Naive thymus-derived CD8-positive, alpha-beta T cell (primary cell): ENCODE measurements at regions of chr19 and their contacts with region 1.

Region 1: DNA sequence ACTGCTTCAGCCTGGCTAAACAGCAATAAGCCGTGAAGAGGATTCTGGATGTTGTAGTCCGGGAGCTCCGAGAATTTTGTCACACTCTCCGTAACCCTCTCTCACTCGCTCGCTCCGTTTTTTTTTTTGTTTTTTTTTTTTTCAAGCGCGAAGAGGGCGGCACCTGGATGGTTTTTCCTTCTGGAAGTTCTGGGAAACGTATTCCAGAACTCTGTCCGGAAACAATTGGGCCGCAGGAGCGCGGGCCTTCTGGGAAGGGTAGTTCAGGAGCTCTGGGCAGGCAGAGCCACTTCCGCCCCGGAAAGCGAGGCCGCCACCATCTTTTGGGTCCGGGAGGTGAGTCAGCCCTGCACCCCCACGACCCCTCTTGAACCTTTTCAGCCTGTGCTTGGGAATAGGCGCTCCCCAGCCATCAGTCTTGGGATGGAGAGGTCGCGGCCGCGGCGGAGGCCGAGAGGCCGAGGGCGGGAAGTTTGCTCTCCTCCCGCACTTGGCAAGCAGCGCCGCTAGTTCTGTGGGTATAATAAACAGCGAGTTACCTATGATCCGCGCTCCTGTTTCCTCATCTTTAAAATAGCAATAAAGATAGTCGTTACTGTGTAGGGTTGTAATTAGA is at the start of gene ZNF227:
- DNase-seq: peak; percentile 60 to 84 (median 76)
- ATAC-seq: peak; percentile 97 to 98
- H3K4me3 Mint-ChIP-seq: peak within 1 kb of the TSS; percentile 92 to 100 (median 96)
- H3K27ac Mint-ChIP-seq: peak within 1 kb of the TSS; percentile 90 to 99 (median 96)
- H3K4me1 Mint-ChIP-seq: peaks cover 9 to 36% (median 31%) of the 10 kb centered on the region in 4 donors
- H3K27me3 Mint-ChIP-seq: no peaks in the 10 kb centered on the region
- polyA plus RNA-seq, gene ZNF227: 9.0 to 12.9 (median 11.2) TPM

Region 2: DNA sequence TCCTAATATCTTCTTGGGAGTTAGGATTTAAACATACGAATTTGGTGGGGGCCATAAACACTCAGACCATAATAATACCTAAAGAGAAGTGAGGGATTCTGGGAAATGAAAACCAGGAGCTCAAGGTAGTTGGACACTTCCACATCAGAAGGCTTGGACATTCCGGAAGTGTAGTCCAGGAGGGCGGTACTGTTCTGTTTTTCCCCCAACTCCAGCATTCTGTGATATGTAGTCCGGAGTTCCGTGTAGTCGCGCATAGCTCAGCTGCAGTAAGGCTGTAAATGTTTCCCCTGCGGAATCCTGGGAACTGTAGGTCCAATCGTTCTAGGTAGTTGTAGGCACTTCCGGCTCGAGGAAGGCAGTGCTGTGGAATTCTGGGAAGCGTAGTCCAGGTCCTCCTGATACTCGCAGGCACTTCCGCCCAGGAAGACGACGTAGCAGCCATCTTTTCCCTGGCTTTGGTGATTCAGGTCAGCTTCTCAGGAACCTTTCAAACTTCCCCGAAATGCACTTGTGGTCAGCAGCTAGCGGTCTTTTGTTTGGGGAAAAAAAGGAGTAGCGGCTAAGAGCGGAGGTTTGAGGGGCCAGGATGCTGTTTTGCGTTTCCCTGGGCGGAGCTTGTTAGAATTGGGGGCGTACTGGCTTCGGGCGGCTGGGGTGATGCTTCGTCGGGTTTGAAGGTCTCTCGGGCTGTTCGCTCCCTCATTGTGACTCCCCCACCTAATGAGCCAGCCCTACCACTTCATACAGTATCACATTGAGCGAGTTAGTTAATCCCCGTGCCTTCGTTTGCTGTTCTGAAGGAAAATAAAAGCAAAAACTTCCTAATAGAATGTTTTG is 47.5 kb before region 1 on chr19 and contains the start of gene ZNF226:
- POLR2A ChIA-PET with region 1: interaction called, 23 read pairs
- DNase-seq: peak; percentile 37 to 91 (median 76)
- ATAC-seq: peak; percentile 94 to 95
- H3K4me3 Mint-ChIP-seq: peak within 1 kb of the TSS; percentile 95 to 99 (median 98)
- H3K27ac Mint-ChIP-seq: peak within 1 kb of the TSS; percentile 97 to 99 (median 98)
- H3K4me1 Mint-ChIP-seq: peaks cover 7 to 33% (median 33%) of the 10 kb centered on the region in 4 donors
- H3K27me3 Mint-ChIP-seq: no peaks in the 10 kb centered on the region
- polyA plus RNA-seq, gene ZNF226: 19.7 to 23.7 (median 20.6) TPM

Region 3: DNA sequence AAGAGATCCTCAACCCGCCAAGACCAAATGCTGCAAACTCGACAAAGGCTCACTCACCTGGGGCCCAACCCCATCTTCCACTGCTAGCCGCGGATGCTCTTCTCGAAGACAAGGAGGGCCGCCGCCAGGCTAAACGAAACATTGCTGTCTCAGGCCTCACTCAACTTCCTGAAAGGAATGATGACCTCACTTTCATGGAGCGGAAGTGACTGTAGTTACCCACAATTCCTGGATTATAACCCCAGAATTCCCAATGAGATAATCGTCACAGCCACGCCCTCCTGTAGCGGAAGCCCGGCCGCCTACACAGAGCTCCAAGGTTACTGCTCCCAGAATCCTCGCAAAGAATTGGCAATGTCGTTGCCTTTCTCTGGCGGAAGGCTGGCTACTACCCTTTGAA is 154.7 kb after region 1 on chr19:
- POLR2A ChIA-PET with region 1: no interaction called
- DNase-seq: no peak
- ATAC-seq: no peak
- H3K4me3 Mint-ChIP-seq: no peak overlapping the region
- H3K27ac Mint-ChIP-seq: no peak overlapping the region
- H3K4me1 Mint-ChIP-seq: no peaks in the 10 kb centered on the region
- H3K27me3 Mint-ChIP-seq: peaks cover 0 to 11% (median 0%) of the 10 kb centered on the region in 5 donors